ENCODE measurements at regions of chr1 and their contacts with region 1.

Region 1: GRCh38 chr1:171485375-171486047 is at the start of gene PRRC2C:
- DNase-seq: peak; percentile 87 to 99 (median 94)
- ATAC-seq: peak; percentile 79
- H3K4me3 ChIP-seq: peak within 1 kb of the TSS; percentile 93 to 97
- H3K4me3 Mint-ChIP-seq: peak within 1 kb of the TSS; percentile 90
- H3K27ac ChIP-seq: peak within 1 kb of the TSS; percentile 96 to 100
- H3K27ac Mint-ChIP-seq: peak within 1 kb of the TSS; percentile 95
- H3K4me1 ChIP-seq: peaks cover 44% of the 10 kb centered on the region
- H3K4me1 Mint-ChIP-seq: peaks cover 48% of the 10 kb centered on the region
- H3K27me3 ChIP-seq: no peaks in the 10 kb centered on the region
- H3K27me3 Mint-ChIP-seq: no peaks in the 10 kb centered on the region
- CTCF ChIP-seq: peak; percentile 89
- total RNA-seq, gene PRRC2C: 416 to 423 TPM

Region 2: GRCh38 chr1:170074250-170075157 is 1411.0 kb before region 1 on chr1 and contains the start of gene KIFAP3:
- CTCF ChIA-PET with region 1: no interaction called
- POLR2A ChIA-PET with region 1: no interaction called
- intact Hi-C with region 1: loop called in 1 of 2 experiments (anchors 10 kb)
- DNase-seq: peak; percentile 89 to 99 (median 95)
- ATAC-seq: peak; percentile 96
- H3K4me3 ChIP-seq: peak within 1 kb of the TSS; percentile 74 to 92
- H3K4me3 Mint-ChIP-seq: peak within 1 kb of the TSS; percentile 89
- H3K27ac ChIP-seq: peak within 1 kb of the TSS; percentile 80 to 88
- H3K27ac Mint-ChIP-seq: peak within 1 kb of the TSS; percentile 94
- H3K4me1 ChIP-seq: peaks cover 28% of the 10 kb centered on the region
- H3K4me1 Mint-ChIP-seq: peaks cover 53% of the 10 kb centered on the region
- H3K27me3 ChIP-seq: no peaks in the 10 kb centered on the region
- H3K27me3 Mint-ChIP-seq: no peaks in the 10 kb centered on the region
- CTCF ChIP-seq: peak; percentile 46
- total RNA-seq, gene KIFAP3: 15.3 to 16.5 TPM

Region 3: DNA sequence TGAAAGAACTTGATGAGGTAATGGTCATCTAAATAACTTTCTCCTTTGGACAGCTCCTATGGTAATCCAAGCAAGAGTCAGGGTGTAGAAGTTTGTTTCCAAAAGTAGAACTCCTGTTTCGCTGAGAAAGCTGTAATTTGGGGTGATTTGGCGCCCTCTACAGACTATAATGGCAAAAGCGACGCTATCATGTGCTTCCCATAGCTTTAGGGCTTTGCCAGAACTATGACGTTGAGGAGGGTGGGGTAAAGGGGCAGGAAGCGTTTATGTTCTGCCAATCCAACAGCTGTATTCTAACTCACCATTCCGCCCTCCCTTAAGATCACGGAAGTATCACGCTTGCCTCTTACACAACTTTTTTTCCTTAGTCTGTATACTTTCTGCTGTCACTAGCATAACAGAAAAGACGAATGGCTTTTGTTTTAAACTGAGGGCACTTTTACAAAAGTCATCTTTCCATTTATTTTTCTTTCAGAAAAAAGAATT is 171.6 kb before region 1 on chr1 and contains the start of gene FMO4:
- CTCF ChIA-PET with region 1: interaction called, 6 read pairs
- POLR2A ChIA-PET with region 1: no interaction called
- intact Hi-C with region 1: loop called (anchors 1 to 10 kb)
- DNase-seq: peak; percentile 62 to 97 (median 79)
- ATAC-seq: peak; percentile 100
- H3K4me3 ChIP-seq: peak within 1 kb of the TSS; percentile 11 to 30
- H3K4me3 Mint-ChIP-seq: peak within 1 kb of the TSS; percentile 80
- H3K27ac ChIP-seq: peak within 1 kb of the TSS; percentile 41 to 48
- H3K27ac Mint-ChIP-seq: peak within 1 kb of the TSS; percentile 92
- H3K4me1 ChIP-seq: peaks cover 7% of the 10 kb centered on the region
- H3K4me1 Mint-ChIP-seq: peaks cover 21% of the 10 kb centered on the region
- H3K27me3 ChIP-seq: no peaks in the 10 kb centered on the region
- H3K27me3 Mint-ChIP-seq: no peaks in the 10 kb centered on the region
- CTCF ChIP-seq: peak; percentile 74
- total RNA-seq, gene FMO4: 0.87 to 1.0 TPM

Region 4: GRCh38 chr1:171355727-171356126 is 129.8 kb before region 1 on chr1:
- CTCF ChIA-PET with region 1: no interaction called
- POLR2A ChIA-PET with region 1: no interaction called
- intact Hi-C with region 1: no loop called
- DNase-seq: no peak
- ATAC-seq: no peak
- H3K4me3 ChIP-seq: no peak overlapping the region
- H3K4me3 Mint-ChIP-seq: no peak overlapping the region
- H3K27ac ChIP-seq: no peak overlapping the region
- H3K27ac Mint-ChIP-seq: no peak overlapping the region
- H3K4me1 ChIP-seq: no peaks in the 10 kb centered on the region
- H3K4me1 Mint-ChIP-seq: no peaks in the 10 kb centered on the region
- H3K27me3 ChIP-seq: no peaks in the 10 kb centered on the region
- H3K27me3 Mint-ChIP-seq: peaks cover 23% of the 10 kb centered on the region
- CTCF ChIP-seq: no peak

Region 5: GRCh38 chr1:171506525-171507304 is 21.2 kb after region 1 on chr1:
- CTCF ChIA-PET with region 1: interaction called, 10 read pairs
- POLR2A ChIA-PET with region 1: interaction called, 11 read pairs
- intact Hi-C with region 1: loop called (anchors 2 kb)
- DNase-seq: no peak
- ATAC-seq: no peak
- H3K4me3 ChIP-seq: peak overlapping the region in 1 of 2 experiments; percentile 2
- H3K4me3 Mint-ChIP-seq: peak overlapping the region; percentile 24
- H3K27ac ChIP-seq: peak overlapping the region in 1 of 2 experiments; percentile 47
- H3K27ac Mint-ChIP-seq: peak overlapping the region; percentile 53
- H3K4me1 ChIP-seq: peaks cover 77% of the 10 kb centered on the region
- H3K4me1 Mint-ChIP-seq: peaks cover 93% of the 10 kb centered on the region
- H3K27me3 ChIP-seq: no peaks in the 10 kb centered on the region
- H3K27me3 Mint-ChIP-seq: no peaks in the 10 kb centered on the region
- CTCF ChIP-seq: no peak

Region 6: DNA sequence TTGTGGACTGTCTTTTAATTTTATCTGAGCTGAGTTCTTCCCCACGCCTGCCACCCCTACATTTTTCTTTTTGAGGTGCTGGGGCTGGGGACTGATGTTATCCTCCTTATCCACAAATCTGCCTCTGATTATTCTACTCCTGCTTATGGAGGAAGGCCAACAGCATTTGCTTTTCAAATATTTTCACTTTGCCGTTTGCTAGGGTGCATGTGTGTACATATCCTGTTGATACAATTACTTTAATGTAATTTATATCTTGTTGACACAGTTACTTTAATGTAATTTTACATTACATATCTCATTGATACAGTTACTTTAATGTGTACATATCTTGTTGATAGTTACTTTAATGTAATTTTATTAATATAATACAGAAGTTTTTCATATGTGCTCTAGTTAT is 36.1 kb after region 1 on chr1:
- CTCF ChIA-PET with region 1: interaction called, 7 read pairs
- POLR2A ChIA-PET with region 1: interaction called, 7 read pairs
- intact Hi-C with region 1: loop called (anchors 2 to 5 kb)
- DNase-seq: no peak
- ATAC-seq: no peak
- H3K4me3 ChIP-seq: no peak overlapping the region
- H3K4me3 Mint-ChIP-seq: no peak overlapping the region
- H3K27ac ChIP-seq: no peak overlapping the region
- H3K27ac Mint-ChIP-seq: peak overlapping the region; percentile 7
- H3K4me1 ChIP-seq: no peaks in the 10 kb centered on the region
- H3K4me1 Mint-ChIP-seq: peaks cover 13% of the 10 kb centered on the region
- H3K27me3 ChIP-seq: no peaks in the 10 kb centered on the region
- H3K27me3 Mint-ChIP-seq: no peaks in the 10 kb centered on the region
- CTCF ChIP-seq: no peak

Region 7: GRCh38 chr1:171781176-171781875 is 295.8 kb after region 1 on chr1 and contains the start of gene METTL13:
- CTCF ChIA-PET with region 1: no interaction called
- POLR2A ChIA-PET with region 1: interaction called, 9 read pairs
- intact Hi-C with region 1: loop called (anchors 1 to 5 kb)
- DNase-seq: peak; percentile 96 to 99 (median 98)
- ATAC-seq: peak; percentile 90
- H3K4me3 ChIP-seq: peak within 1 kb of the TSS; percentile 89 to 92
- H3K4me3 Mint-ChIP-seq: peak within 1 kb of the TSS; percentile 95
- H3K27ac ChIP-seq: peak within 1 kb of the TSS; percentile 75 to 89
- H3K27ac Mint-ChIP-seq: peak within 1 kb of the TSS; percentile 96
- H3K4me1 ChIP-seq: peaks cover 33% of the 10 kb centered on the region
- H3K4me1 Mint-ChIP-seq: peaks cover 54% of the 10 kb centered on the region
- H3K27me3 ChIP-seq: no peaks in the 10 kb centered on the region
- H3K27me3 Mint-ChIP-seq: no peaks in the 10 kb centered on the region
- CTCF ChIP-seq: no peak
- total RNA-seq, gene METTL13: 6.6 to 6.9 TPM

Region 8: GRCh38 chr1:171817511-171818265 is 332.2 kb after region 1 on chr1:
- CTCF ChIA-PET with region 1: no interaction called
- POLR2A ChIA-PET with region 1: no interaction called
- intact Hi-C with region 1: no loop called
- DNase-seq: peak in 2 of 9 experiments; percentile 10 to 35
- ATAC-seq: no peak
- H3K4me3 ChIP-seq: no peak overlapping the region
- H3K4me3 Mint-ChIP-seq: no peak overlapping the region
- H3K27ac ChIP-seq: no peak overlapping the region
- H3K27ac Mint-ChIP-seq: no peak overlapping the region
- H3K4me1 ChIP-seq: no peaks in the 10 kb centered on the region
- H3K4me1 Mint-ChIP-seq: no peaks in the 10 kb centered on the region
- H3K27me3 ChIP-seq: no peaks in the 10 kb centered on the region
- H3K27me3 Mint-ChIP-seq: no peaks in the 10 kb centered on the region
- CTCF ChIP-seq: no peak

Region 9: GRCh38 chr1:172429331-172430127 is 944.0 kb after region 1 on chr1:
- CTCF ChIA-PET with region 1: no interaction called
- POLR2A ChIA-PET with region 1: no interaction called
- intact Hi-C with region 1: loop called in 1 of 2 experiments (anchors 10 kb)
- DNase-seq: peak in 6 of 9 experiments; percentile 22 to 80 (median 47)
- ATAC-seq: peak; percentile 75
- H3K4me3 ChIP-seq: no peak overlapping the region
- H3K4me3 Mint-ChIP-seq: no peak overlapping the region
- H3K27ac ChIP-seq: no peak overlapping the region
- H3K27ac Mint-ChIP-seq: peak overlapping the region; percentile 7
- H3K4me1 ChIP-seq: peaks cover 51% of the 10 kb centered on the region
- H3K4me1 Mint-ChIP-seq: peaks cover 49% of the 10 kb centered on the region
- H3K27me3 ChIP-seq: no peaks in the 10 kb centered on the region
- H3K27me3 Mint-ChIP-seq: no peaks in the 10 kb centered on the region
- CTCF ChIP-seq: peak; percentile 82